Right cardiac atrium (tissue), 5 donors: ENCODE measurements at regions of chr5 and their contacts with region 1.

Region 1: DNA sequence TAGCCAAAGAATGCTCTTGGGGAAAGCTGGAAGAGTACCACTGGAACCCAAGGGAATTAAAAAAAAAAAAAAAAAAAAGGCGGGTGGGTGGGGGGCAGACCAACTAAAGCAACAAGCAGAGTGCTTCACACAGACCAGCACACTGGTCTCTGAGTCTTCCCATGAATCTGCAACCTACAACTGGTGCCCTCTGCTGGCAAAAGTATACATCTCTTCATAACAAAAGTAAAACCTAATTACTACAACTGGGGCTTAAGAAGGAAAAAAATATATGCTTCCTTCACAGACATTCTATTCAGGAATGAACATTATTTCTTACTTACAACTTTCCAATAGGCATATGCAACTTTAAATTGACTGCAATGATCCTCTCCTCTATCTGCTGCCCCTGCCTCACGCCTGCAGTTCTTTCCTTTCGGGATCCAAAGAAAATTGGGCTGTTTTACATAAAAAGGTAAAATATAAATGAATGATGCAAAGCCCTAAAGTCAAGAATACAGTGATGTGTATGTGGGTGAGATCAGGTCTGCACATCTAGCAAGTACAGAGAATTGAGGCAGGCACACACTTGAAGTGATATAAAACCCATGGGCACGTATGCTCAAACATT is 7.2 kb upstream of the KLHL3 start:
- DNase-seq: peak in 1 of 3 donors; percentile 20
- ATAC-seq: peak; percentile 81 to 82
- H3K4me3 ChIP-seq: no peak overlapping the region
- H3K27ac ChIP-seq: no peak overlapping the region
- H3K4me1 ChIP-seq: no peaks in the 10 kb centered on the region
- H3K27me3 ChIP-seq: no peaks in the 10 kb centered on the region

Region 2: DNA sequence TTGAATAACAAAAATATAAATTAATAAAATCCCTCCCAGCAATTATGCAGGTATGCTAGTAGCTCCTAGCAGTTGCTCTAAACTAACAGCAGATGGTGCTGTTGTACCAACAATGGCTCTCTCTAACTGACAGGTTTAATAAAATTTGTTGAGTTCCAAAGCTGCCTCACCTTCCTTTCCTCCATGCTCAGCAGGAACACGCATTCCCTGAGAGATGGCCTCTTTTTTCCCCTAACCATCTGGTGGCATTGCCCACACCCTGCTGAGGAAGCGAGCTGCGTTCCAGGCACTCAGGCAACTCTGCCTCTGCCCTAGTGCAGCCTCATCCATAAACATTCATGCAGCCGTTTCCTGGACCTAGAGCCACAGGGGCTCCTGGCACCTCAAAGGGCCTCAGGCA is 113.5 kb before region 1 on chr5:
- intact Hi-C with region 1: loop called (anchors 2 to 10 kb)
- DNase-seq: no peak
- ATAC-seq: peak; percentile 68 to 80
- H3K4me3 ChIP-seq: no peak overlapping the region
- H3K27ac ChIP-seq: peak overlapping the region; percentile 94
- H3K4me1 ChIP-seq: peaks cover 8% of the 10 kb centered on the region
- H3K27me3 ChIP-seq: no peaks in the 10 kb centered on the region

Region 3: GRCh38 chr5:137660349-137660817 is 82.8 kb before region 1 on chr5:
- intact Hi-C with region 1: loop called (anchors 5 kb)
- DNase-seq: peak; percentile 69 to 87 (median 70)
- ATAC-seq: peak; percentile 82 to 90
- H3K4me3 ChIP-seq: no peak overlapping the region
- H3K27ac ChIP-seq: no peak overlapping the region
- H3K4me1 ChIP-seq: no peaks in the 10 kb centered on the region
- H3K27me3 ChIP-seq: no peaks in the 10 kb centered on the region